Endothelial cell of umbilical vein (primary cell): ENCODE measurements at regions of chr11 and their contacts with region 1.

Region 1: GRCh38 chr11:10328314-10329090 is 23.6 kb downstream of the ADM start:
- DNase-seq: peak; percentile 94
- H3K4me3 ChIP-seq: peak overlapping the region in 1 of 3 experiments; percentile 14
- H3K27ac ChIP-seq: peak overlapping the region; percentile 84
- H3K4me1 ChIP-seq: peaks cover 67% of the 10 kb centered on the region
- H3K27me3 ChIP-seq: no peaks in the 10 kb centered on the region
- CTCF ChIP-seq: no peak
- POLR2A ChIP-seq: peak; percentile 43

Region 2: GRCh38 chr11:10087186-10087585 is 241.3 kb before region 1 on chr11:
- CTCF ChIA-PET with region 1: no interaction called
- POLR2A ChIA-PET with region 1: no interaction called
- dilution Hi-C with region 1: no loop called
- intact Hi-C with region 1: no loop called
- DNase-seq: no peak
- H3K4me3 ChIP-seq: no peak overlapping the region
- H3K27ac ChIP-seq: peak overlapping the region; percentile 5
- H3K4me1 ChIP-seq: peaks cover 10% of the 10 kb centered on the region
- H3K27me3 ChIP-seq: no peaks in the 10 kb centered on the region
- CTCF ChIP-seq: no peak
- POLR2A ChIP-seq: no peak

Region 3: DNA sequence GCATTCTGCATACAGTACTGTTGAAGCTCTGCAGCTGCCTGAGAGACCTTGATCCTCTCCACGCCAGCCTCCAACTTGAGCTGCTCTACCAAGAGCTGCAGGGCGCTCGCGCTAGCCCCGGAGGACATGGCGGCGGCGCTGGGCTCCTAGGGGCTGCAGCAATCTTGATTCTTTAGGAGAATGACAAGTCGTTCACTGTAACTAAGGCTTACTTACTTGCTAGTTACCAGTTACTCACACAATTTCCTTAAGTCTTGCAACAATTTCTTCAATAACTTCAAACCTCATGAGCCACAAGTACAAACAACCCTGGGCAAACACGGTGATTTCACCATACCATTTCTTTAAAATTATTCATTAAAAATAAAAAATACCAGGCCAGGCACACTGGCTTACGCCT is 56.4 kb before region 1 on chr11:
- CTCF ChIA-PET with region 1: no interaction called
- POLR2A ChIA-PET with region 1: no interaction called
- dilution Hi-C with region 1: no loop called
- intact Hi-C with region 1: no loop called
- DNase-seq: no peak
- H3K4me3 ChIP-seq: no peak overlapping the region
- H3K27ac ChIP-seq: no peak overlapping the region
- H3K4me1 ChIP-seq: no peaks in the 10 kb centered on the region
- H3K27me3 ChIP-seq: no peaks in the 10 kb centered on the region
- CTCF ChIP-seq: no peak
- POLR2A ChIP-seq: no peak

Region 4: DNA sequence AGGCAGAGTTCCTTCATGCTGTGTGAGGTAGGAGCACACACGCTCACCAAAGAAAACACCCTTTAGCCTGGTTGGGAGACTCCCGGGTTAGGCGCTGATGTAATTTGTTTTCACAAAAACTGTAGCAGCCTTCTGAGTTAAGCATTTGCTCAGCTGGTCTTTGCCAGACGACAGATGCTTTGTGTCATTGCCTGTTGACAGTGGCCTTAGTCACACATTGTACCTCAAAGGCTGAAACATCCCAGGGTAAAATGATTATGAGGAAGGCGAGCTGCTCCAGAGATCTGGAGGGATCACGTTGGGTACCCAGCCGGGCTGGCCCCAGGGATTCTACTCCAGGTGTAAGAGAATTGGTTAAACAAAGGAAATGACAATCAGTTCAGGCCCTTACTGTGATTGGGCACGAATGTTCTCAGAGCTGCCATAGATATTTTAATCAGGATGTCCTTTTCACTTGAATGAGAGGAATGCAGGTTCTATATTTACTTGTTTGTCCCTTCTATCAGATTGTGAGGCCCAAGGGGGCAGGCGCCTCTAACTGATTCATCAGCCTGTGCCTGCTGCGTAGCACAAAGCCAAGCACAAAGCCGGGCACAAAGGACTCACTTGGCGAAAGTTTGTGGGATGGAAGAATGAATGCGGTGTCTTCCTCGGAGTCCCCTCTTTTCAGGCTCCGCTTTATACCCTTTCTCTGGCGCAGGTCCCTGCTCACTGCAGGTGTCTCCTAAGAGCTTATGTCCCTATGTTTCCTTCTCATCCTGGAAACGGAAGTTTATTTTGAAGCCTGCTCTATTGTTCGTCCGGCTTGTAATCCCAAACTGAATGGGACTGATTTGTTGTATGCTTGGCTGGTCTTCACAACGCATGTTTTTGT is 23.5 kb after region 1 on chr11:
- CTCF ChIA-PET with region 1: interaction called, 5 read pairs
- POLR2A ChIA-PET with region 1: interaction called, 4 read pairs
- dilution Hi-C with region 1: no loop called
- intact Hi-C with region 1: loop called (anchors 1 kb)
- DNase-seq: peak; percentile 79
- H3K4me3 ChIP-seq: no peak overlapping the region
- H3K27ac ChIP-seq: peak overlapping the region; percentile 89
- H3K4me1 ChIP-seq: peaks cover 23% of the 10 kb centered on the region
- H3K27me3 ChIP-seq: no peaks in the 10 kb centered on the region
- CTCF ChIP-seq: no peak
- POLR2A ChIP-seq: no peak